ENCODE measurements at regions of chr22 and their contacts with region 1.

Region 1: DNA sequence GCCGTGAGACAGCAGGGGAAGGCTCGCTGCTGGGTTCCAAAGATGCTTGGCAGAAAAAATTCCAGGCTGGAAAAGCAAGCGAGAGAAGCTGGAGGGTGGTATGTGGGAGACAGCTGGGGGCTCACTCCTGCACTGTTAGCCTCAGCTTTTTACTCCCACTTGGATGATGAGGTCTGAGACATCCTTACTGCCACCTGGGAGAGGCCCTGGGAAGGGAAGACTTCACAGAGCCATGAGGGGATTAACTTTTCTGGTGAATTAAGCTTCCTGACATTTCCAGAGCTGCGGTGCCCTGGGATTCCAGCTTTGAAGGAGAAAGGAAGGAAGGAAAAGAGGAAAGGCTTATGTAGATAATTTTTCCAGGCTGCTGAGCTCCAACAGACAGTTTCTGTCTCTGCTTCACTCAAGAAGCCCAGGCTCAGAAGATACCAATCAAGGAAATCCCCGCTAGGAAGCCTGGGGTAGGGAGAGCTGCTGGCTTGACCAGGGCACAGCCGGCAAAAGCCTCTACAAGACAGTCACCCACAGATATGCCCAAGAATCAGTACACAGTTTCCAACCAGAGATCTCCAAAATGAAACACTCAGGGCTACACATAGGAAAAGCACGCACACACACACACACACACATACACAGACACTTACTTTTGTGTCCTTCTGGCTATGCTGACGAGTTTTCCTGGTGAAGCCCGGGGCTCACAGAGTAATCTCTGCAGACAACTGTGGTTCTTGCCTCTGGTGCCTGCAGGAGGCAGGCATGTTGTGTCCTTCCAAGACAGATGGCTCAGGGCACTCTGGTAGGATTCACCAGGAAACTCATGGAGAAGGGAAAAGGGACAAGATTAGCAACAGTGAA is 907 bp downstream of the MCHR1 start:
- DNase-seq: no peak
- H3K4me3 ChIP-seq: no peak overlapping the region
- H3K4me3 Mint-ChIP-seq: no peak overlapping the region
- H3K27ac Mint-ChIP-seq: no peak overlapping the region
- H3K4me1 ChIP-seq: no peaks in the 10 kb centered on the region
- H3K4me1 Mint-ChIP-seq: peaks cover 12% of the 10 kb centered on the region
- H3K27me3 ChIP-seq: no peaks in the 10 kb centered on the region
- H3K27me3 Mint-ChIP-seq: no peaks in the 10 kb centered on the region
- CTCF ChIP-seq: no peak

Region 2: DNA sequence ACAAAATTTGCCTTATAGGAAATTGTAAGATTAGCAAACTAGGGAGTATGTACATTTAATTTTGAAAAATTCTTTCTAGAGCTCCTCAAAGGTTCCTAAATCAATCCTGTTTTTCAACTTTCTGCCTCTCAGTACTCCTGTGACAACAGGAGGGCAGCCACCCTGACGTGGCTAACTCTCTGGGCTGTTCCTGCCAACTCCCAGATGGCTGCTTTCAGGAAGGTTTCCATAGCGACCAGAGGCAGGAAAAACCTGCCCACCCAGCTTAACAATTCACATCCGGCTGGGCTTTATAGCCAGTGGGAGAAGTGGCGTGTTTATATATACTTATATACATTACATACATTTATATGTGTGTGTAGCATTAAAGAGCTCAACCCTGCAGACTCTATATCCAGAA is 283.3 kb before region 1 on chr22:
- CTCF ChIA-PET with region 1: no interaction called
- POLR2A ChIA-PET with region 1: no interaction called
- intact Hi-C with region 1: no loop called
- DNase-seq: peak in 1 of 2 experiments; percentile 47
- H3K4me3 ChIP-seq: no peak overlapping the region
- H3K4me3 Mint-ChIP-seq: no peak overlapping the region
- H3K27ac Mint-ChIP-seq: no peak overlapping the region
- H3K4me1 ChIP-seq: no peaks in the 10 kb centered on the region
- H3K4me1 Mint-ChIP-seq: peaks cover 7% of the 10 kb centered on the region
- H3K27me3 ChIP-seq: no peaks in the 10 kb centered on the region
- H3K27me3 Mint-ChIP-seq: no peaks in the 10 kb centered on the region
- CTCF ChIP-seq: no peak

Region 3: DNA sequence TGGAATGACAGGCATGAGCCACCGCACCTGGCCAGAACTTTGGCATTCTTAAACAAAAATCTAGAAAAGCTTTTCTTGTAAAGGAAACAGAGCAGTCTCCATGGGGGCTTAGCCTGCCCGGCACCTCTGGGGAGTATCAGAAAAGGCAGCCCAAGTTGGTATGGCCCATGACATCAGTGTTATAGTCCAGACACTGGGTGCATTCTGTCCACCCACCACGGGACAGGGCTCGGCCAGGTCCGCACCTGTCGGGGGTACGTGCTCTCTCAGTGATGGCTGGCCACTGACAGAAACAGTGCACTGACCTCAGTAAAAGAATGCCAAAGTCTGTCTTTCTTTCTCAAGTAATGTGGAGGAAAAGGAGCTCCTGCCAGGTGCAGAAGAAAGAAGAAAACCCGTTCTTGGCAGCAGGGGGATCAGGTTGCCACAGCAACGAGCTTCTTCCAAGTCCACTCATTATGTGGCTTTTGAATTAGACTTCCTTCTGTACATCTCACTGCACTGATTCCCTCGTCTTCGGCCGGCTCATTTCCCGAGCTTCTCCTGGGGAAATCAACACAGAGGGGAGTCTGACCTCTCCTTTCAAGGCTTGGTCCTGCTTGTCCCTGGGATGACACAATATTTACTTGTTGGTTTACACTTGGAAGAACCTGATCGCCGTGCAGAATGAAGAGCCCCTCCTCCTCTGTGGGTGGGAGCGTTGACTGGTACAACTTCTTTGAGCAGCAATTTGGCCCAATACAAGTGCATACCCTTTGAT is 34.2 kb after region 1 on chr22:
- CTCF ChIA-PET with region 1: interaction called, 13 read pairs
- POLR2A ChIA-PET with region 1: interaction called, 3 read pairs
- intact Hi-C with region 1: loop called (anchors 1 kb)
- DNase-seq: peak; percentile 63 to 72
- H3K4me3 ChIP-seq: no peak overlapping the region
- H3K4me3 Mint-ChIP-seq: peak overlapping the region; percentile 66
- H3K27ac Mint-ChIP-seq: peak overlapping the region; percentile 90
- H3K4me1 ChIP-seq: peaks cover 36% of the 10 kb centered on the region
- H3K4me1 Mint-ChIP-seq: peaks cover 24% of the 10 kb centered on the region
- H3K27me3 ChIP-seq: no peaks in the 10 kb centered on the region
- H3K27me3 Mint-ChIP-seq: no peaks in the 10 kb centered on the region
- CTCF ChIP-seq: no peak

Region 4: GRCh38 chr22:40758390-40758789 is 78.2 kb after region 1 on chr22:
- CTCF ChIA-PET with region 1: interaction called, 55 read pairs
- POLR2A ChIA-PET with region 1: no interaction called
- intact Hi-C with region 1: loop called (anchors 1 kb)
- DNase-seq: no peak
- H3K4me3 ChIP-seq: no peak overlapping the region
- H3K4me3 Mint-ChIP-seq: no peak overlapping the region
- H3K27ac Mint-ChIP-seq: no peak overlapping the region
- H3K4me1 ChIP-seq: no peaks in the 10 kb centered on the region
- H3K4me1 Mint-ChIP-seq: no peaks in the 10 kb centered on the region
- H3K27me3 ChIP-seq: no peaks in the 10 kb centered on the region
- H3K27me3 Mint-ChIP-seq: no peaks in the 10 kb centered on the region
- CTCF ChIP-seq: no peak

Region 5: GRCh38 chr22:40764763-40765441 is 84.7 kb after region 1 on chr22:
- CTCF ChIA-PET with region 1: interaction called, 55 read pairs
- POLR2A ChIA-PET with region 1: no interaction called
- intact Hi-C with region 1: loop called (anchors 1 kb)
- DNase-seq: no peak
- H3K4me3 ChIP-seq: no peak overlapping the region
- H3K4me3 Mint-ChIP-seq: no peak overlapping the region
- H3K27ac Mint-ChIP-seq: no peak overlapping the region
- H3K4me1 ChIP-seq: no peaks in the 10 kb centered on the region
- H3K4me1 Mint-ChIP-seq: no peaks in the 10 kb centered on the region
- H3K27me3 ChIP-seq: no peaks in the 10 kb centered on the region
- H3K27me3 Mint-ChIP-seq: no peaks in the 10 kb centered on the region
- CTCF ChIP-seq: no peak

Region 6: DNA sequence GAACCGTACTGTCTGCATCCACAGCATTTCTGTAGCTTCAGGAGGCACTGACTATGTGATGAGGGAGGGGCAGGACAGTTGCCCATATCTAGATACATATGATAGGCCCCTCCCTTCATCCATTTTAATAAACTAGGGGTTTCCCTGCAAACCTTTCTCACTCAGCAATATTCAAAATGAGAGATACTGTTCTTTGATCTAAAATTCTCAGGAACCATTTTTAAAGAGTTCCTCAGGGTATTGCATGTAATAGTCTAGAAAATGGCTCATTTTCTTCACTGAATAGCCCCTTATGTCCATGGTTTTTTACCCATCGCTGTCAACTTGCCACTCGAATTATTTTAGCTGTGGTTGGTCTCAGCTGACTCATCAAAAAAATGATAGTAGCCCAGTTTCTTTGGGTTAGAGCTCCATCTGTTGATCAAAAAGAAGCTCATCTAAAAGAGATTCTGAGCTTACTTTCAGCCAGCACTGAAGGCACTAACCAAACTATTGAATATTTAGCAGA is 218.7 kb after region 1 on chr22:
- CTCF ChIA-PET with region 1: interaction called, 24 read pairs
- POLR2A ChIA-PET with region 1: no interaction called
- intact Hi-C with region 1: loop called (anchors 2 kb)
- DNase-seq: peak in 1 of 2 experiments; percentile 40
- H3K4me3 ChIP-seq: no peak overlapping the region
- H3K4me3 Mint-ChIP-seq: no peak overlapping the region
- H3K27ac Mint-ChIP-seq: no peak overlapping the region
- H3K4me1 ChIP-seq: 0 out of 2 replicates have a peak, but pooled peaks cover 3% of the 10 kb centered on the region
- H3K4me1 Mint-ChIP-seq: peaks cover 2% of the 10 kb centered on the region
- H3K27me3 ChIP-seq: no peaks in the 10 kb centered on the region
- H3K27me3 Mint-ChIP-seq: no peaks in the 10 kb centered on the region
- CTCF ChIP-seq: peak; percentile 11 to 45

Region 7: DNA sequence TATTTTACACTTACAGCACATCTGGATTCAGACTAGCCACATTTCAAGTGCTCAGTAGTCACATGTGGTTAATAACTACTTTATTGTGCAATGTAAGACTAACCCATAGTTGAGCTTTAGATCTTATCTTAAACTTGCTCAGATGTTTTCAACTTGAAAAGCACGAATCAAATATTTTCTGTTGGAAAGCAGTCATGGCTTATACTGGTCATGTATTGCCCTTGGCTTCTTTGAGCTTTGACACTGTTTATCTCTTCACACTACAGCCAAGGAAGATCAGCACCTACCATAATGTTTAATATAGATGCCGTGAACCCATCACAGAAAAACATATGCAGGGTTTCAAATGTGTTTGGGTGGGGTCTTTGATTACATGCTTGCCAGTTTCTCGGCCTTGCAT is 275.4 kb after region 1 on chr22:
- CTCF ChIA-PET with region 1: no interaction called
- POLR2A ChIA-PET with region 1: no interaction called
- intact Hi-C with region 1: no loop called
- DNase-seq: no peak
- H3K4me3 ChIP-seq: no peak overlapping the region
- H3K4me3 Mint-ChIP-seq: no peak overlapping the region
- H3K27ac Mint-ChIP-seq: no peak overlapping the region
- H3K4me1 ChIP-seq: no peaks in the 10 kb centered on the region
- H3K4me1 Mint-ChIP-seq: peaks cover 14% of the 10 kb centered on the region
- H3K27me3 ChIP-seq: no peaks in the 10 kb centered on the region
- H3K27me3 Mint-ChIP-seq: no peaks in the 10 kb centered on the region
- CTCF ChIP-seq: no peak